Panc1 (cell line): ENCODE measurements at regions of chr1 and their contacts with region 1.

Region 1: GRCh38 chr1:203861379-203862184 is at the start of gene SNRPE:
- DNase-seq: peak; percentile 95
- ATAC-seq: peak; percentile 97
- H3K4me3 ChIP-seq: peak within 1 kb of the TSS; percentile 91 to 97
- H3K27ac ChIP-seq: peak within 1 kb of the TSS; percentile 98
- H3K4me1 ChIP-seq: peaks cover 16% of the 10 kb centered on the region
- H3K27me3 ChIP-seq: no peaks in the 10 kb centered on the region
- CTCF ChIP-seq: peak; percentile 98
- total RNA-seq, gene SNRPE: 217 TPM

Region 2: GRCh38 chr1:204041803-204042505 is 180.4 kb after region 1 on chr1:
- CTCF ChIA-PET with region 1: no interaction called
- POLR2A ChIA-PET with region 1: interaction called, 16 read pairs
- in situ Hi-C with region 1: no loop called
- intact Hi-C with region 1: no loop called
- DNase-seq: no peak
- ATAC-seq: no peak
- H3K4me3 ChIP-seq: no peak overlapping the region
- H3K27ac ChIP-seq: no peak overlapping the region
- H3K4me1 ChIP-seq: no peaks in the 10 kb centered on the region
- H3K27me3 ChIP-seq: no peaks in the 10 kb centered on the region
- CTCF ChIP-seq: no peak

Region 3: GRCh38 chr1:204128964-204129896 is 267.6 kb after region 1 on chr1:
- CTCF ChIA-PET with region 1: interaction called, 10 read pairs
- POLR2A ChIA-PET with region 1: interaction called, 5 read pairs
- in situ Hi-C with region 1: loop called (anchors 25 kb)
- intact Hi-C with region 1: no loop called
- DNase-seq: no peak
- ATAC-seq: peak; percentile 85
- H3K4me3 ChIP-seq: peak overlapping the region in 1 of 2 experiments; percentile 30; a peak in 1 of 4 replicates
- H3K27ac ChIP-seq: peak overlapping the region; percentile 61
- H3K4me1 ChIP-seq: peaks cover 29% of the 10 kb centered on the region
- H3K27me3 ChIP-seq: no peaks in the 10 kb centered on the region
- CTCF ChIP-seq: peak; percentile 96

Region 4: DNA sequence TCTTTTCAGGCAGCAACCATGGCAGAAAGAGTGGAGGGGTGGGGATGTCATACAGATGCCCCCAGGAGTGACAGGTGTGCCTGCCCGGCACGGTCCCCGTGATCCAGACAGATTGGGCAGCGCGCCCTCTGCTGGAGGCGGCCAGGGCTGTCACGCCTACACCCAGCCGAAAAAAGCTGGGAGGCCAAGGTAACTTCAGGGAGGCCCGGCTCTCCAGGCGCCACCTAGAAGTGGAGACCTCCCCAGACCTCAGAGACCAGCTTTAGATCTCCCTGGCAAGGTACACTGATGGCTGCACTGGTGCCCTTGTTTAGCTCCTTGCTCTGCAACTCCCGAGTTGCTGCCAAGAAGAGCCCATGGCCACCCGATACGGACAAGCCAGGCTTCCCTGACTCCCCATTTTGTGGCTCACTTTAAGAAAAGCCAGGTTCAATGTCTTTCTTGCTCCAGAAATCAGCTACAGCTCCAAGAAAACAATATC is 345.6 kb after region 1 on chr1:
- CTCF ChIA-PET with region 1: no interaction called
- POLR2A ChIA-PET with region 1: no interaction called
- in situ Hi-C with region 1: no loop called
- intact Hi-C with region 1: loop called (anchors 5 kb)
- DNase-seq: peak; percentile 25
- ATAC-seq: peak; percentile 97
- H3K4me3 ChIP-seq: no peak overlapping the region
- H3K27ac ChIP-seq: no peak overlapping the region
- H3K4me1 ChIP-seq: no peaks in the 10 kb centered on the region
- H3K27me3 ChIP-seq: no peaks in the 10 kb centered on the region
- CTCF ChIP-seq: peak; percentile 97

Region 5: GRCh38 chr1:204363335-204364124 is 501.9 kb after region 1 on chr1:
- CTCF ChIA-PET with region 1: interaction called, 4 read pairs
- POLR2A ChIA-PET with region 1: no interaction called
- in situ Hi-C with region 1: no loop called
- intact Hi-C with region 1: loop called (anchors 10 kb)
- DNase-seq: peak; percentile 71
- ATAC-seq: peak; percentile 79
- H3K4me3 ChIP-seq: peak overlapping the region; percentile 19 to 52
- H3K27ac ChIP-seq: peak overlapping the region; percentile 51
- H3K4me1 ChIP-seq: peaks cover 5% of the 10 kb centered on the region; the same call in 1 of the 2 replicates
- H3K27me3 ChIP-seq: no peaks in the 10 kb centered on the region
- CTCF ChIP-seq: peak; percentile 96